MCF 10A (cell line): ENCODE measurements at regions of chr3 and their contacts with region 1.

Region 1: GRCh38 chr3:11060500-11061251 is 68.1 kb downstream of the SLC6A1 start:
- DNase-seq: peak; percentile 78
- H3K4me3 Mint-ChIP-seq: no peak overlapping the region
- H3K27ac Mint-ChIP-seq: no peak overlapping the region
- H3K4me1 Mint-ChIP-seq: no peaks in the 10 kb centered on the region
- H3K27me3 Mint-ChIP-seq: peaks cover 18% of the 10 kb centered on the region
- CTCF ChIP-seq: peak; percentile 95

Region 2: DNA sequence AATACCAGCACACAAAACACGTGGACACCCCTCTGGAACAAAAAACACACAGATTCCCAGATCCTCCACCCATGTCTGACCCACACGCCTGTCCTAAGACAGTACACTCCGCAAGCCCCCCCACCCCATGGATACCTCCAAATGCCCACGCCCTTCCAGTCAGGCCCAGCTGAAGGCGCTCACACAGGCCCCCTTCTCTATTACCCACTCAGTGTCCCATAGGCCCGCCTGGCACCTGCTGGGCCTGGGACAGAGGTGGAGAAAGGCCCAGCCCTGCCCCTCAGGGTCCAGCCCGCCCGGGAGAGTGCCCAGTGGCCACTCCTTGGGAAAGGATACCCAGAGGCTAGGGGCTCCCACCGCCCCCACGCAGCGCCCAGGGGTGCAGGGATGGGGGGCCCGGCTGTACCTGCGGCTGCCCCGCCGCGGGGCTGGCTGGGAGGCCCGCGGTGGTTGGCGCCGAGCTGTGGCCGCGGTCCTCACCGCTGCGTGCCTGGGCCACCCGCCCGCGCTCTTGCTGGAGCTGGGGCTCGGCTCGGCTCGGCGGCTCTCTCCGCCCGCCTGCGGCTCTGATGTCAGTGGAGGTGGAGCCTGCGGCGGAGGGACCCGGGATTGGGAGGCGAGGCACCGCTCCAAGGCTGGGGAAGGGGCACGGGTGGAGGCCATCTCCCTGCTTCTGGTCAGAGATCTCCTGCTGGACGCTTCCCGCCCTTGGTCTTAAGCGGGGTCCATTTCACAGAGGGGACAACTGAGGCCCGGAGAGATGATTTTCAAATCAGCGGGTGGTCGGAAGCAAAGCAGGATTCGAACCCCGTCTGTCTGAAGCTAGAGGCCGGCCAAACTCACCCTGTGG is 1291.0 kb before region 1 on chr3 and contains the start of gene CAMK1:
- CTCF ChIA-PET with region 1: no interaction called
- POLR2A ChIA-PET with region 1: no interaction called
- intact Hi-C with region 1: no loop called
- DNase-seq: peak; percentile 57
- H3K4me3 Mint-ChIP-seq: peak within 1 kb of the TSS; percentile 59
- H3K27ac Mint-ChIP-seq: peak within 1 kb of the TSS; percentile 46
- H3K4me1 Mint-ChIP-seq: peaks cover 7% of the 10 kb centered on the region
- H3K27me3 Mint-ChIP-seq: no peaks in the 10 kb centered on the region
- CTCF ChIP-seq: no peak
- total RNA-seq, gene CAMK1: 8.3 and 11.7 TPM in 2 replicates

Region 3: GRCh38 chr3:10766049-10766705 is 294.5 kb before region 1 on chr3:
- CTCF ChIA-PET with region 1: interaction called, 138 read pairs
- POLR2A ChIA-PET with region 1: no interaction called
- intact Hi-C with region 1: no loop called
- DNase-seq: no peak
- H3K4me3 Mint-ChIP-seq: no peak overlapping the region
- H3K27ac Mint-ChIP-seq: no peak overlapping the region
- H3K4me1 Mint-ChIP-seq: peaks cover 2% of the 10 kb centered on the region
- H3K27me3 Mint-ChIP-seq: peaks cover 2% of the 10 kb centered on the region
- CTCF ChIP-seq: no peak

Region 4: GRCh38 chr3:11077466-11077865 is 16.8 kb after region 1 on chr3:
- CTCF ChIA-PET with region 1: interaction called, 40 read pairs
- POLR2A ChIA-PET with region 1: no interaction called
- intact Hi-C with region 1: no loop called
- DNase-seq: peak; percentile 42
- H3K4me3 Mint-ChIP-seq: no peak overlapping the region
- H3K27ac Mint-ChIP-seq: no peak overlapping the region
- H3K4me1 Mint-ChIP-seq: peaks cover 12% of the 10 kb centered on the region
- H3K27me3 Mint-ChIP-seq: no peaks in the 10 kb centered on the region
- CTCF ChIP-seq: no peak

Region 5: GRCh38 chr3:11140054-11140712 is 79.5 kb after region 1 on chr3:
- CTCF ChIA-PET with region 1: interaction called, 16 read pairs
- POLR2A ChIA-PET with region 1: interaction called, 4 read pairs
- intact Hi-C with region 1: no loop called
- DNase-seq: peak; percentile 75
- H3K4me3 Mint-ChIP-seq: peak overlapping the region; percentile 38
- H3K27ac Mint-ChIP-seq: peak overlapping the region; percentile 16
- H3K4me1 Mint-ChIP-seq: peaks cover 37% of the 10 kb centered on the region
- H3K27me3 Mint-ChIP-seq: no peaks in the 10 kb centered on the region
- CTCF ChIP-seq: no peak

Region 6: GRCh38 chr3:11201246-11202024 is 140.8 kb after region 1 on chr3:
- CTCF ChIA-PET with region 1: interaction called, 21 read pairs
- POLR2A ChIA-PET with region 1: interaction called, 3 read pairs
- intact Hi-C with region 1: loop called (anchors 1 kb)
- DNase-seq: peak; percentile 76
- H3K4me3 Mint-ChIP-seq: peak overlapping the region; percentile 10
- H3K27ac Mint-ChIP-seq: peak overlapping the region; percentile 89
- H3K4me1 Mint-ChIP-seq: peaks cover 25% of the 10 kb centered on the region
- H3K27me3 Mint-ChIP-seq: no peaks in the 10 kb centered on the region
- CTCF ChIP-seq: no peak

Region 7: GRCh38 chr3:11323813-11324212 is 263.1 kb after region 1 on chr3:
- CTCF ChIA-PET with region 1: interaction called, 16 read pairs
- POLR2A ChIA-PET with region 1: no interaction called
- intact Hi-C with region 1: no loop called
- DNase-seq: no peak
- H3K4me3 Mint-ChIP-seq: no peak overlapping the region
- H3K27ac Mint-ChIP-seq: no peak overlapping the region
- H3K4me1 Mint-ChIP-seq: no peaks in the 10 kb centered on the region
- H3K27me3 Mint-ChIP-seq: no peaks in the 10 kb centered on the region
- CTCF ChIP-seq: no peak

Region 8: GRCh38 chr3:11362600-11362999 is 301.9 kb after region 1 on chr3:
- CTCF ChIA-PET with region 1: no interaction called
- POLR2A ChIA-PET with region 1: no interaction called
- intact Hi-C with region 1: no loop called
- DNase-seq: no peak
- H3K4me3 Mint-ChIP-seq: no peak overlapping the region
- H3K27ac Mint-ChIP-seq: no peak overlapping the region
- H3K4me1 Mint-ChIP-seq: peaks cover 8% of the 10 kb centered on the region
- H3K27me3 Mint-ChIP-seq: no peaks in the 10 kb centered on the region
- CTCF ChIP-seq: no peak

Region 9: GRCh38 chr3:12868039-12869034 is 1807.7 kb after region 1 on chr3:
- CTCF ChIA-PET with region 1: no interaction called
- POLR2A ChIA-PET with region 1: no interaction called
- intact Hi-C with region 1: no loop called
- DNase-seq: peak; percentile 83
- H3K4me3 Mint-ChIP-seq: no peak overlapping the region
- H3K27ac Mint-ChIP-seq: no peak overlapping the region
- H3K4me1 Mint-ChIP-seq: peaks cover 8% of the 10 kb centered on the region
- H3K27me3 Mint-ChIP-seq: peaks cover 33% of the 10 kb centered on the region
- CTCF ChIP-seq: peak; percentile 82